ENCODE measurements at regions of chr1 and their contacts with region 1.

Region 1: GRCh38 chr1:3530926-3531818 is 76.7 kb downstream of the ARHGEF16 start:
- DNase-seq: peak; percentile 65 to 91 (median 80)
- ATAC-seq: peak; percentile 85
- H3K4me3 Mint-ChIP-seq: peak overlapping the region; percentile 84 to 95 (median 89)
- H3K27ac Mint-ChIP-seq: peak overlapping the region; percentile 71 to 99 (median 94)
- H3K4me1 Mint-ChIP-seq: peaks cover 10 to 30% (median 18%) of the 10 kb centered on the region in 4 donors
- H3K27me3 Mint-ChIP-seq: no peaks in the 10 kb centered on the region

Region 2: DNA sequence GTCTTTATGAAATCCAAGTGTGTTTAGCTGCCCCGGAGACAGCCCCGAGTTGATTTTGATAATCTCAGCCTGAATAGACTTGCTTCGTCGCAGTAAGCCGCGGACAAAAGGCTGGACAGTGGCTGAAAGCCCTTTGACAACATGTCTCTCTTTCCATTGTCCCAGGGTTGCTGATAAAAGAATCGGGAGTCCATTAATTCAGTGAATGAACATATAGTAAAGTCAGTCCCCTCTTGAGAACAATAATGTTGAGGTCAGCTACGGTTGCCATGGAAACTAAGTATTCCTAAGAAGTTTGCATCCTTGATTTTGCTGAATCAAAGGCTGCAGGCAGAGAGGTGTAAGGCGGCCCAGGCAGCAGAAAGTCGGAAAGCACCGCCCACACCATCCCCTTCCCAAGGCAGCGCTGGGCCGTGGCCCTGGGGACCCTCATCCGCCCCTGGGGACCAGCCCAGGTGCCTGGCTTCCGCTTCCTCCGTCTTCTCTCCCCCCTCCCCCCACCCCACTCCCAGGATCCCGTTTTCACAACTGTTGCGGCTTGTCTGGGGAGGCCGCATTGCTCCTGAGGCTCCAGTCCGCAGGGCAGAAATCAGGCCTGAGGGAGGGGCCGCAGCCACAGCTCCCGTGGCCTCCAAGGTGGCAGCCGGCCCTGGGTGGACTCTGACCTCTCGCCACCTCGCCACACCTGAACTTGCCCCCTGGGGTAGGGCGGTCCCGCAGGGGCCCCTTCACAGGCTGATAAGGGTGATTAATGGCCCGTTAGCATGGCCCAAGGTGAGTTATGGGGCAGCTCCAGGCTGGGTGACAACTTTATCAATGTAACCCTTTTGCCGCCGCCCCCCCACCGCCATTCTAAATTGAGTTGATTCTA is 281.3 kb before region 1 on chr1:
- POLR2A ChIA-PET with region 1: no interaction called
- DNase-seq: no peak
- ATAC-seq: no peak
- H3K4me3 Mint-ChIP-seq: no peak overlapping the region
- H3K27ac Mint-ChIP-seq: peak overlapping the region in 1 of 10 donors; percentile 9
- H3K4me1 Mint-ChIP-seq: no peaks in the 10 kb centered on the region
- H3K27me3 Mint-ChIP-seq: peaks cover 8 to 17% (median 12%) of the 10 kb centered on the region in 5 donors

Region 3: DNA sequence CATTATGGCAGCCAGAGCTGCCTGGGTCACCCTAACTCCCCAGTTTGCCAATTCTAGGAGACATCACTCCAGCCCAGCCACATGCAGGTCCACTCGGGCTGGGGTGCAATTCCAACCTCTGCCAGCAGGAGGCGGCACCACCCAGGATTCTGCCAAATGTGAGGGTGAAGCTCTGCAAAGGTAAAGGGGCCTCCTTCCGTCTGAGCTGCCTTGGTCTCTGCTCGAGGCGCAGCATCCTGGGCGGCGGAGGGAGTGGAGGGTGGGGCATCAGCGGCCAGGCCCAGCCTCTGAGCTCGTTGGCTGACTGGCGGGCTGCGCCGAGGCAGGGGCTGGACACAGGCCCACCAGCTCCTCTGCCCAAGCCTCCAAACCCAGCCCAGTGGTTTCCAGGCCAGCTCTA is 12.9 kb before region 1 on chr1:
- POLR2A ChIA-PET with region 1: interaction called, 12 read pairs
- DNase-seq: peak in 6 of 10 donors; percentile 18 to 42 (median 30)
- ATAC-seq: no peak
- H3K4me3 Mint-ChIP-seq: no peak overlapping the region
- H3K27ac Mint-ChIP-seq: peak overlapping the region in 1 of 10 donors; percentile 47
- H3K4me1 Mint-ChIP-seq: peaks cover 0 to 7% (median 1%) of the 10 kb centered on the region in 4 donors
- H3K27me3 Mint-ChIP-seq: no peaks in the 10 kb centered on the region

Region 4: GRCh38 chr1:3624200-3625136 is 93.3 kb after region 1 on chr1 and contains the start of gene TPRG1L:
- POLR2A ChIA-PET with region 1: interaction called, 12 read pairs
- DNase-seq: peak; percentile 97 to 99 (median 98)
- ATAC-seq: peak; percentile 89 to 92
- H3K4me3 Mint-ChIP-seq: peak within 1 kb of the TSS; percentile 91 to 99 (median 97)
- H3K27ac Mint-ChIP-seq: peak within 1 kb of the TSS; percentile 89 to 99 (median 98)
- H3K4me1 Mint-ChIP-seq: peaks cover 25 to 59% (median 51%) of the 10 kb centered on the region in 4 donors
- H3K27me3 Mint-ChIP-seq: peaks cover 0 to 1% (median 0%) of the 10 kb centered on the region in 5 donors
- polyA plus RNA-seq, gene TPRG1L: 41.9 to 48.3 (median 42.3) TPM

Measured in naive thymus-derived CD8-positive, alpha-beta T cell (primary cell).